CD14-positive monocyte (primary cell): ENCODE measurements at regions of chrX and their contacts with region 1.

Region 1: DNA sequence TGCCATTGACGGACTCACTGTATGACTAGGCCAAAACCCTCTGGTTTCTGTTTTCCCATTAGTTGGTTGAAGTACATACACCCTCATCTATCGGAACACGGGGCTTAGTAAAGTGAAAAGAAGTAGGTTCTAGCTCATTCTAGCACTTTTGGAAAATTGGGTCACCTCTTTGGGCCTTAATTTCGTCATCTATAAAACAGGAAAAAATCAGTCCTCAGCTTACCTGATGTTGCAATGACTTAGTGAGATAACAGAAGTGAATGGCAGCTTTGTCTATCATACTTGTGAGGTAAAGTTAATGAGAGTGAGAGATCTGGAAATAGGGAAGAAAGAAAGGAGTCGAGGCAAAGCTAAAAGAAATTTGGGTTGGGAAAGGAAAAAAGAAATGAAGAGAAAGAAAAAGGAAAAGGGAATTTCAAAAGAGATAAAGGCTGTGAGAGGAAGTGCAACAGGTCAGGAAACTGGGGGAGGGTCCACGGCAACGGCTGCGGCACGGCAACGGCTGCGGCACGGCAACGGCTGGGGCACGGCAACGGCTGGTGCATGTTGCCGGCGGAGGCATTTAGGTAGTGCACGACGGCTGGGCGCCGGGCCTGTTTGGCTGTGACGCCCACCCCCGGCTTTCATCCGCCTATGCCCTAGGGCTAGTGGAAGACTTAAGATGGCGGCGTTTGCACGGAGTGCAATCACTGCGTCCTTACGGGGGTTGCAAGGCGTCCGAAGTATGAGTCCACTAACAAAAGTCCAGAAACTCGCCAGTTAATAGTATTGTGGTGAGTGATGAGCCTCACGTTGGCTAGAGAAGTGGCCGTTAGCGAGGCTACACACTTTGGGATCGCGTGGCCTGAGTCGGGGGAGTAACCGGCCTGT is 360.1 kb upstream of the ZCCHC13 start:
- DNase-seq: peak; percentile 80 to 89 (median 81)
- H3K4me3 ChIP-seq: peak overlapping the region; percentile 84 to 98 (median 96)
- H3K4me3 Mint-ChIP-seq: peak overlapping the region; percentile 82 to 97
- H3K27ac ChIP-seq: peak overlapping the region; percentile 93 to 98
- H3K27ac Mint-ChIP-seq: peak overlapping the region; percentile 92 to 97 (median 95)
- H3K4me1 ChIP-seq: peaks cover 12 to 20% of the 10 kb centered on the region in 2 donors
- H3K4me1 Mint-ChIP-seq: peaks cover 14% of the 10 kb centered on the region
- H3K27me3 ChIP-seq: no peaks in the 10 kb centered on the region
- H3K27me3 Mint-ChIP-seq: peaks cover 0 to 3% (median 2%) of the 10 kb centered on the region in 3 donors
- CTCF ChIP-seq: no peak

Region 2: GRCh38 chrX:74614093-74614909 is 670.4 kb after region 1 on chrX and contains the start of gene RLIM:
- intact Hi-C with region 1: loop called in 1 of 2 experiments (anchors 10 kb)
- DNase-seq: peak; percentile 93 to 97 (median 96)
- H3K4me3 ChIP-seq: peak within 1 kb of the TSS; percentile 78 to 95 (median 92)
- H3K4me3 Mint-ChIP-seq: peak within 1 kb of the TSS; percentile 90 to 95
- H3K27ac ChIP-seq: peak within 1 kb of the TSS; percentile 96 to 99
- H3K27ac Mint-ChIP-seq: peak within 1 kb of the TSS; percentile 98 to 100 (median 99)
- H3K4me1 ChIP-seq: peaks cover 6 to 18% of the 10 kb centered on the region in 2 donors
- H3K4me1 Mint-ChIP-seq: peaks cover 9% of the 10 kb centered on the region
- H3K27me3 ChIP-seq: no peaks in the 10 kb centered on the region
- H3K27me3 Mint-ChIP-seq: peaks cover 0 to 5% (median 2%) of the 10 kb centered on the region in 3 donors
- CTCF ChIP-seq: no peak
- polyA plus RNA-seq, gene RLIM: 7.6 to 10.3 (median 8.4) TPM